Aorta (tissue), 5 donors: ENCODE measurements at regions of chr3 and their contacts with region 1.

Region 1: DNA sequence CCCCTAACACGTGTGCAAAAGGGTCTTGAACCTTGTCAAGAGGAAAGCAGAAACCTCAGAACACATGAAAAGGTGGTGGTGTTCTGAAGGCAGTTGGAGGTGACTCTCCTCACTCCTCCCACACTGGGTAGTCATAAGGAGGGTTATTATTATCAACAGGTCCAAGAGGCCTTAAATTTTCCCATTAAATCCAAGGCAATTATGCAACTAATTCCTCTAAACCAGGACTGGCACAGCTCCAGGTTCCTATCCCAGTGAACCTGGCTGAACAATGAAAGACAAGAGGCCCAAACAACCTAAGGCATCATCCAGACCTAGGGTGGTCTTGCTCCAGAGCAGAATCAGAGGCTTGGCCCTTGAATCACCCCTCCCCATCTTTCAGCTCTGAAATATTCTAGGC is 15.0 kb downstream of the MYLK start:
- DNase-seq: no peak
- ATAC-seq: no peak
- H3K4me3 ChIP-seq: no peak overlapping the region
- H3K27ac ChIP-seq: peak overlapping the region; percentile 46 to 53
- H3K4me1 ChIP-seq: peaks cover 5 to 12% of the 10 kb centered on the region in 2 donors
- H3K27me3 ChIP-seq: no peaks in the 10 kb centered on the region

Region 2: GRCh38 chr3:123432832-123433523 is 436.2 kb before region 1 on chr3:
- intact Hi-C with region 1: no loop called
- DNase-seq: no peak
- ATAC-seq: peak; percentile 49
- H3K4me3 ChIP-seq: no peak overlapping the region
- H3K27ac ChIP-seq: peak overlapping the region; percentile 51 to 93
- H3K4me1 ChIP-seq: peaks cover 1 to 3% of the 10 kb centered on the region in 2 donors
- H3K27me3 ChIP-seq: no peaks in the 10 kb centered on the region

Region 3: GRCh38 chr3:123595396-123596180 is 273.6 kb before region 1 on chr3:
- intact Hi-C with region 1: no loop called
- DNase-seq: no peak
- ATAC-seq: no peak
- H3K4me3 ChIP-seq: no peak overlapping the region
- H3K27ac ChIP-seq: no peak overlapping the region
- H3K4me1 ChIP-seq: no peaks in the 10 kb centered on the region
- H3K27me3 ChIP-seq: no peaks in the 10 kb centered on the region

Region 4: DNA sequence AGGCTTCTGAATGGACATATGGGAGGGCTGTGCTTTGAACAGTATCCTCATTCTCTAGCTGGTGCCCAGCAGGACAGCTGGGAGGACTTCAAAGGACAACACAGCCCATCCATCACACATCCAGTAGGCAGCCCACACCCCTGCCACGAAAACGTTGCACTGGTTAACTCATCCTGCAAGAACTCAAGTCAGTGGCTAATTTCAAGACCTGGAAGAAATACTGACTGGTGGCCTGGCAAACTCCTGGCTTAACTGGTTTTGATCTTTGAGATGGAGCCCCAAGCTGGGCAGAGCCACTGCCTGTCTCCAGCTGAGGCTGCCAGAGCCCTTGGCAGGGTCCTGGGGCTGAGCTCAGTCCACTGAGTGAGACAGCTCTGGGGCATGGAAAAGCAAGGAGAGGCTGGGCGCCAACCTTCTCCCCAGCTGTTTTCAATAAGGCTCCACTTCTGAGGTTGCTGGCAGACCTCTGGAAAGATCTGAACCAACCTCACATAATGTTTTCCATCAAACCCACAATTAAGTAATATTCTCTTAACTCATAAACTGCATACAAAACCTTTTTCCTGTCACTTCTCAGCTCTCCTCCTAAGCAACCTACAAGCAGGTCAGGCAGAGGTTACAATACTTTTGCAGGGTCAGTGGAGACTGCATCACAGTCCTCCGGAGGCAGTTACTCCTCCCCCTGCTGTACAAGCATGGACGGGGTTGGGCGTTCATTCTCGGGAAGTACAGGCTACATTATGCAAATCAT is 95.3 kb before region 1 on chr3:
- intact Hi-C with region 1: no loop called
- DNase-seq: peak; percentile 81 to 83
- ATAC-seq: peak; percentile 79
- H3K4me3 ChIP-seq: no peak overlapping the region
- H3K27ac ChIP-seq: peak overlapping the region; percentile 83 to 92
- H3K4me1 ChIP-seq: peaks cover 4% of the 10 kb centered on the region in 2 donors
- H3K27me3 ChIP-seq: no peaks in the 10 kb centered on the region

Region 5: DNA sequence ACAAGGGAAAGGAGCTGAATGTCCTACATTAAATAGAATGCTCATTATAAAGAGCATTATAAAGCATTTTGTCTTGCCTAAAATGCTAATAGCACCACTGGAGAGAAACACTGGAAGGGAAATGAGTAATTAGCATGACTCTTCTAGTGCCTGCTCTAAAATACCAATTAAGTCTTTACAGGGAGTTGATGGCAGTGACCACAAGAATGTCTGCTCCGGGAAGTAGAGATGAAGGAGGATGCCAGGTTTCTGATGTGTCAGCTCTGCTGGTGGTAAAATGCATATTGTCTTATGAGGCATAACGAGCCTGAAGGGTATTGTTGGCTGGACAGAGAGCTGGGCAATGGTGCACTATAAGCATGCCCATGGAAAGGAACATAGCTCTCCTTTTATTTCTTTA is 34.5 kb before region 1 on chr3:
- intact Hi-C with region 1: loop called in 1 of 2 experiments (anchors 5 kb)
- DNase-seq: no peak
- ATAC-seq: no peak
- H3K4me3 ChIP-seq: no peak overlapping the region
- H3K27ac ChIP-seq: no peak overlapping the region
- H3K4me1 ChIP-seq: peaks cover 0 to 6% of the 10 kb centered on the region in 2 donors
- H3K27me3 ChIP-seq: no peaks in the 10 kb centered on the region

Region 6: GRCh38 chr3:123843668-123844067 is 25.5 kb before region 1 on chr3:
- intact Hi-C with region 1: loop called in 1 of 2 experiments (anchors 2 kb)
- DNase-seq: no peak
- ATAC-seq: no peak
- H3K4me3 ChIP-seq: no peak overlapping the region
- H3K27ac ChIP-seq: peak overlapping the region in 1 of 2 donors; percentile 72
- H3K4me1 ChIP-seq: peaks cover 0 to 4% of the 10 kb centered on the region in 2 donors
- H3K27me3 ChIP-seq: no peaks in the 10 kb centered on the region

Region 7: GRCh38 chr3:124149771-124150170 is 280.6 kb after region 1 on chr3:
- intact Hi-C with region 1: no loop called
- DNase-seq: no peak
- ATAC-seq: peak; percentile 36
- H3K4me3 ChIP-seq: no peak overlapping the region
- H3K27ac ChIP-seq: no peak overlapping the region
- H3K4me1 ChIP-seq: peaks cover 8 to 10% of the 10 kb centered on the region in 2 donors
- H3K27me3 ChIP-seq: no peaks in the 10 kb centered on the region